Common myeloid progenitor, CD34-positive (primary cell): ENCODE measurements at regions of chr11 and their contacts with region 1.

Region 1: DNA sequence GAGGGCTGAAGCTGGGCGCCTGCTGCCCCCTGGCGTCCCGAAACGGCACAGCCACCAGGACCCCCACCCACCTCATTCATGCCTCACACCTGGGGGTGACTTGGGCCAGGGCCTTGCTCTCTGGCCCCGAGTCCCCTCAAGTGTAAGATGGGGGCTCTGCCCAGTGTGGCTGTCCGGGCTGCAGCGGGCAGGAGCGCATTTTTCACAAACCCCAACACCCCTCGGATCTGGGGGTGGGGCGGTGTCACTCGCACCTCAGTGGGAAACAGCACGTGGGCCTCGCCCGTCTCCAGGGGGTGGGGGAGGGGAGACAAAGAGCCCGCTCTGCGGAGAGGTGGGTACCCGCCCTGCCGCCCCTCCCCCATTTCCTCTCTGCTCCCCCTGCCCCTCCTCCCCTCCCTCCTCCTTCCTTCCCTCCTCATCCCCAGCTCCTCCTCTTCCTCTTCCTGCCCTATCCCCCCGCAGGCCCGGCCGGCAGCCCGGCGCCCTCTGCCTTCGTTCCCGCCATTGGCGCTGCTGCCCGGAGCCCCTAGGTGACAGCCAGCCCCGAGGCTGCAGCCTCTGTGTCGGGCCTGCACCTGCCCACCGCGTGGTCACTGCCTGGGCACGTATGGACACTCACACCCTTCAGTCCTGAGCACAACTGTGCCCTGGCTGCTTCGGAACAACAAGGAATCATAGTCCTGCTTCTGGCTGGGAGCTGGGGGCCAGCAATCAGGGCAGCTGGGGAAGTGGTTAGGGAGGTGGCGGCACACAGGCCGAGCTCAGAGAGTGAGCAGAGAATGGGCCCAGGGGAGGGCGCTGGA is 6.8 kb upstream of the CDKN1C start:
- DNase-seq: peak; percentile 48 to 75 (median 72)
- H3K4me3 ChIP-seq: peak overlapping the region; percentile 7 to 69 (median 53)
- H3K27ac ChIP-seq: peak overlapping the region in 1 of 2 experiments; percentile 54
- H3K4me1 ChIP-seq: peaks cover 0 to 35% (median 30%) of the 10 kb centered on the region in 4 experiments
- H3K27me3 ChIP-seq: no peaks in the 10 kb centered on the region

Region 2: DNA sequence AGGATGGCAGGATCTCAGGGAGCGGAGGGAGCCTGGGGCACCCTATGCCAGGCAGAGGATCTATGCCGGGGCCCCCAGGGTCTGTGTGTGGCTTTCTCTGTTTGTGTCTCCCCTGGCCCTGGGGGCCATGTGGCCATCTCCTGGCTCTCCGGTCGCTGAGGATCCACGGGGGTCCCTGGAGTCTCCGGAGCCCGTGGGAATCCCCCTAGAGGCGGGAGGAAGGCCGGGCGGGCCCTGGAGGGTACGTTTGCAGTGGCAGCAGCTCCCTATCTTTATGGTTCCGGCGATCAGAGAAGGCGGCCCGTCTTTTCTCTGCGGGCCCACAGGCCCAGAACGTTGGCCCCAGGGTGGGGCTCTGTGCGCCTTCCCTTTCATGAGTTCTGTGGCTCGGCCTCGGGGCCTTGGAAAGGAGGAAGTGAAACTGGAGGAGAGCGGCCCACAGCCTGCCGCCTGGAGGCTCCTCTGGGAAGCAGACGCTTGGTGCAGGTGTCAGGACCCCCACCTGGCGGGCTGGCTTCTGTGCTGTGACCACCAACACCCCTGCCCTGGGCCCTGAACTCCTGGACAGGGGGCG is 365.5 kb before region 1 on chr11:
- CTCF ChIA-PET with region 1: interaction called, 462 read pairs
- POLR2A ChIA-PET with region 1: no interaction called
- DNase-seq: peak; percentile 68 to 76 (median 73)
- H3K4me3 ChIP-seq: peak overlapping the region in 3 of 7 experiments; percentile 25 to 64 (median 46)
- H3K27ac ChIP-seq: peak overlapping the region in 1 of 2 experiments; percentile 43
- H3K4me1 ChIP-seq: peaks cover 0 to 18% (median 14%) of the 10 kb centered on the region in 4 experiments
- H3K27me3 ChIP-seq: no peaks in the 10 kb centered on the region

Region 3: GRCh38 chr11:2853401-2853800 is 39.0 kb before region 1 on chr11:
- CTCF ChIA-PET with region 1: interaction called, 10 read pairs
- POLR2A ChIA-PET with region 1: no interaction called
- DNase-seq: no peak
- H3K4me3 ChIP-seq: no peak overlapping the region
- H3K27ac ChIP-seq: no peak overlapping the region
- H3K4me1 ChIP-seq: peaks cover 0 to 6% (median 2%) of the 10 kb centered on the region in 4 experiments
- H3K27me3 ChIP-seq: no peaks in the 10 kb centered on the region